Gastrocnemius medialis (tissue), 4 donors: ENCODE measurements at regions of chr1 and their contacts with region 1.

Region 1: GRCh38 chr1:37474046-37474759 is at the start of gene ZC3H12A:
- DNase-seq: peak; percentile 79 to 92
- ATAC-seq: peak; percentile 59
- H3K4me3 ChIP-seq: peak within 1 kb of the TSS; percentile 79 to 94 (median 93)
- H3K27ac ChIP-seq: peak within 1 kb of the TSS; percentile 89 to 98 (median 97)
- H3K4me1 ChIP-seq: peaks cover 65 to 72% of the 10 kb centered on the region in 2 donors
- H3K27me3 ChIP-seq: no peaks in the 10 kb centered on the region
- CTCF ChIP-seq: no peak
- POLR2A ChIP-seq: peak; percentile 99
- total RNA-seq, gene ZC3H12A: 5.3 to 27.1 (median 8.6) TPM

Region 2: DNA sequence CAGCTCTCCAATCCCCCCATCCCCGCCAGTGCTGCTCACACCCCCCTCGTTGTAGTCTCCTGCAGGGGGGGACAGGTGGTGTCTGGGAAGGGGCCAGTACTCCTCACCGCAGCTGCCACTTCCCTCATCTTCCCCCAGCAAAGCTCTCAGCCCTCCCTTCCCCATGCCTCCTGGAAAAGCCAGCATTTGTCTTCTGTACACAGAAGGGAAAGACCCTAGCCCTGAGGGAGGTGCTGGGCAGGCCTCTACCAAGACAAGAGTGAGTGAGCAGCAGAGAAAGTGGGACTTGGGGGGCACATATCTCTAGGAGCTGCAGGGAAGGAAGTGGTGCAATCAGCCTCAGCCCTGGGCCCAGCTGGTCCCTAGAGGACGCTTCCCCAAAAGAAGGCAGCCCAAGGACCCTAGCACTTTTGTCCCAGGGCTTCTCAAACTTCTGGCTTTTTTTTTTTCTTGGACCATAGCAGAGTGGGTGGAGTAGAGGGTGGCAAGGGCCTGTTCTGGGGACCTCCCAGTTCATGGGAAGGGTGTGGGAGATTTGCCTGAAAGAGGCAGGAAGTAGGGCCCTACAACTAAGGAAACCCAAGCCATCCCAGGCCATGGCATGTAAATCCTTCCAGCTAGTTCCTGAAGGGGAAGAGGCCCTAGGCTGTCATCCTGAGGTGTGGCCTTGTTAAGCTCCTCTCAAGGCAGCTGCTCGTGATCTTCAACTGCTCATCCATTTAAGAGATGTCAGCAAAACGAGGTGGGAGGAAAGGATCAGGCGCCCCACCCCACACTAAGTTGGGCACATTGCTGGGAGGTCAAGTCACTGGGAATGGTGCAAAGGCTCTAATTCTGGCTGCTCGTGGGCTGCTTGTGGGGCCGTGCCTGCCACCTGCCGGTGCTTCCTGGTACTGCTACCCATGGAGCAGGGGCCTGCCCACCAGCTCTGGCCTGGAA is 12.7 kb after region 1 on chr1:
- in situ Hi-C with region 1: no loop called
- intact Hi-C with region 1: loop called (anchors 1 kb)
- DNase-seq: peak; percentile 54 to 90
- ATAC-seq: peak; percentile 79 to 83
- H3K4me3 ChIP-seq: no peak overlapping the region
- H3K27ac ChIP-seq: peak overlapping the region; percentile 66 to 89 (median 76)
- H3K4me1 ChIP-seq: peaks cover 25 to 27% of the 10 kb centered on the region in 2 donors
- H3K27me3 ChIP-seq: no peaks in the 10 kb centered on the region
- CTCF ChIP-seq: peak; percentile 98 to 99 (median 99)
- POLR2A ChIP-seq: no peak

Region 3: DNA sequence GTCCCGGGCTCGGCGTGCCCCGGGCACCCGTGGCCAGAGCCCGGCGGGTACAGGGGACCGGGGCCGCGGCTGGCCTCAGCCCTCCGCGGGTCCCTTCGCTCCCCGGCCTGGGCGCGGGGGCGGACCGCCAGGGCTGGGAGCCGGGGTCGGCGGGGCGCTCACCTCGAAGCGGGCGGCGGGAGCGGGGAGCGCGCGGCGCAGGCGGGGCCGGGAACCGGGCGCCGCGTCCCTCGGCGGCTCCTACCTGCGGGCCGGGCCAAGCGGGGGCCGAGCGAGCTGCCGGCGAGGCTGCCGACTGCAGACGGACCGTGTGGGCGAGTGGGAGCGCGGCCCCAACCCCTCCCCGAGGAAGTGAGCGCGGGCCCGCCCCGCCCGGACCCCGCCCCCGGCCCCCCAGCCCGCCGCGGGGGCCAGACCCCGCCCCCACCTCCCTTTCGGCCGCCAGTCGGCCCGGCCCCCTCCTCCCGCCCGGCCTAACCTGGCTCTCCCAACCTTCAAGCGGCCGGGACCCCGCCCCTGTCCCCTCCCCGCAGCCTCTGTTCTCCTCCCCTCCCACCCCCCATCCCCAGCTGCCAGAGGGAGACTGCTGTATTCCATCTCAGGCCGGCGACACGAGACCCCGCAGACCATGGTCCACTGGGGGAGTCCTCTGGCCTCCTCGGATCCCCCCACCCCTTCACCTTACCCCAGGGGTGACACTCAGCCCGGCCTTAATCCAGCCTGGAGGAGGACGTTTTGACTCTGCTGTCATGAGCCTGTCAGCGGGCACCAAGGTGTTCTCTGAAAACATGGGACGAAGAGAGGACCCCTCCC is 531.2 kb after region 1 on chr1 and contains the start of gene FHL3:
- in situ Hi-C with region 1: no loop called
- intact Hi-C with region 1: loop called (anchors 10 kb)
- DNase-seq: peak; percentile 88 to 95
- ATAC-seq: peak; percentile 5 to 11
- H3K4me3 ChIP-seq: peak within 1 kb of the TSS; percentile 74 to 89 (median 83)
- H3K27ac ChIP-seq: peak within 1 kb of the TSS; percentile 94 to 100 (median 98)
- H3K4me1 ChIP-seq: peaks cover 53 to 65% of the 10 kb centered on the region in 2 donors
- H3K27me3 ChIP-seq: no peaks in the 10 kb centered on the region
- CTCF ChIP-seq: no peak
- POLR2A ChIP-seq: peak; percentile 90 to 91
- total RNA-seq, gene FHL3: 725 to 1,282 (median 1,051) TPM